ENCODE measurements at regions of chr9 and their contacts with region 1.

Region 1: DNA sequence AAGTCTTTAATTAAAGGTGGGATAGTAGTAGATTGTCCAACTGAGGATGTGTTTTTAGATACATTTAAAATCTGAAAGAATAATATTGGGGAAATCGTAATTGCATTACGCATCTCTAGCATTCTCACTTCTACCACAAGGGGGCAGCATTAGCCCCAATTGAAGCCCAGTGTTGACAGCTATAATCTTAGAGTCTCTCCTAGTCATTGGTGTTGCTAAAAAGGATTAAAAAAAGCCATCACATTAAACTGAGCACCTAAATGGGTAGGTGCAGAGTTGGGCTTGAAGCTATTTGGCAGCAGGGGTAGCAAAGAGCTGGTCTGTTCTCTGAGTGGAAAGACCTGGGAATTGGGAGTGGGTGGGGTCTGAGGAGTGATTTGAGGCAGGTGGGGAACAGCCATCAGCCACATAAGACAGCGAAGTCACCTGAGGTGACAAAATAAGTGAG is 177.2 kb downstream of the OSTF1 start:
- DNase-seq: peak; percentile 42
- ATAC-seq: peak; percentile 86
- H3K4me3 ChIP-seq: no peak overlapping the region
- H3K27ac ChIP-seq: no peak overlapping the region
- H3K4me1 ChIP-seq: no peaks in the 10 kb centered on the region
- H3K27me3 ChIP-seq: no peaks in the 10 kb centered on the region
- CTCF ChIP-seq: peak; percentile 83
- POLR2A ChIP-seq: no peak
- RAD21 ChIP-seq: peak; percentile 70

Region 2: DNA sequence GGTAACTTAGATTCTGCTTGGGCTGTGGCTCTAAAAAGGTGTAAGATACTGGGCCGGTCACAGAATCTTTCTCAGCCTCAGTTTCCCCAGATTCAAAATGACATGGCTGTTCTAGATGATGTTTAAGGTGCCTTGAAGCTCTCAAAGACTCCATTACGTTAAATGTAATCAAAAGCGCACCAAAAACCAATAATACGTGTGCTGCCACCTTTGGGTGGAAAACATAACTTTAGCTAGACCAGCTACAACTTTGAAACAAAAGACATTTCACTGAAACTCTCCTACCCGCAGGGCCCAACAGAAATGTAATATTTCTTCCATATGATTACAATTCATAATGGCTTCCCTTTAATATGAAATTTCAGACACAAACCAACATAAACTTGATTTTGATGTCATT is 590.0 kb after region 1 on chr9:
- CTCF ChIA-PET with region 1: no interaction called
- POLR2A ChIA-PET with region 1: no interaction called
- dilution Hi-C with region 1: no loop called
- in situ Hi-C with region 1: no loop called
- intact Hi-C with region 1: loop called (anchors 5 kb)
- DNase-seq: peak; percentile 4
- ATAC-seq: 0 out of 2 replicates have a peak, but pooled peaks have one; percentile 27
- H3K4me3 ChIP-seq: no peak overlapping the region
- H3K27ac ChIP-seq: no peak overlapping the region
- H3K4me1 ChIP-seq: no peaks in the 10 kb centered on the region
- H3K27me3 ChIP-seq: no peaks in the 10 kb centered on the region
- CTCF ChIP-seq: peak; percentile 41
- POLR2A ChIP-seq: no peak
- RAD21 ChIP-seq: peak; percentile 29

Region 3: GRCh38 chr9:75866273-75866871 is 600.8 kb after region 1 on chr9:
- CTCF ChIA-PET with region 1: no interaction called
- POLR2A ChIA-PET with region 1: no interaction called
- dilution Hi-C with region 1: no loop called
- in situ Hi-C with region 1: no loop called
- intact Hi-C with region 1: loop called (anchors 1 kb)
- DNase-seq: peak; percentile 44
- ATAC-seq: peak; percentile 81
- H3K4me3 ChIP-seq: no peak overlapping the region
- H3K27ac ChIP-seq: no peak overlapping the region
- H3K4me1 ChIP-seq: no peaks in the 10 kb centered on the region
- H3K27me3 ChIP-seq: no peaks in the 10 kb centered on the region; the same call in none of the 2 replicates
- CTCF ChIP-seq: peak; percentile 66
- POLR2A ChIP-seq: no peak
- RAD21 ChIP-seq: peak; percentile 48

Measured in IMR-90 (cell line).